ENCODE measurements at regions of chr7 and their contacts with region 1.

Region 1: GRCh38 chr7:99489235-99489634 is 10.8 kb downstream of the ZNF394 start:
- DNase-seq: no peak
- H3K4me3 ChIP-seq: no peak overlapping the region
- H3K27ac ChIP-seq: no peak overlapping the region
- H3K4me1 ChIP-seq: no peaks in the 10 kb centered on the region
- H3K27me3 ChIP-seq: no peaks in the 10 kb centered on the region
- CTCF ChIP-seq: no peak
- POLR2A ChIP-seq: no peak

Region 2: GRCh38 chr7:99459087-99459486 is 30.1 kb before region 1 on chr7:
- intact Hi-C with region 1: no loop called
- DNase-seq: no peak
- H3K4me3 ChIP-seq: no peak overlapping the region
- H3K27ac ChIP-seq: no peak overlapping the region
- H3K4me1 ChIP-seq: no peaks in the 10 kb centered on the region
- H3K27me3 ChIP-seq: no peaks in the 10 kb centered on the region
- CTCF ChIP-seq: no peak
- POLR2A ChIP-seq: no peak

Region 3: GRCh38 chr7:99551767-99552463 is 62.7 kb after region 1 on chr7 and contains the start of gene FAM200A:
- intact Hi-C with region 1: loop called (anchors 2 kb)
- DNase-seq: peak; percentile 74 to 78
- H3K4me3 ChIP-seq: peak within 1 kb of the TSS; percentile 68 to 96 (median 70)
- H3K27ac ChIP-seq: peak within 1 kb of the TSS; percentile 77 to 92
- H3K4me1 ChIP-seq: peaks cover 3 to 4% of the 10 kb centered on the region in 2 donors
- H3K27me3 ChIP-seq: no peaks in the 10 kb centered on the region
- CTCF ChIP-seq: no peak
- POLR2A ChIP-seq: peak; percentile 87
- total RNA-seq, gene FAM200A: 2.6 to 10.2 (median 5.6) TPM

Measured in breast epithelium (tissue), 4 donors.